Common myeloid progenitor, CD34-positive (primary cell): ENCODE measurements at regions of chr1 and their contacts with region 1.

Region 1: DNA sequence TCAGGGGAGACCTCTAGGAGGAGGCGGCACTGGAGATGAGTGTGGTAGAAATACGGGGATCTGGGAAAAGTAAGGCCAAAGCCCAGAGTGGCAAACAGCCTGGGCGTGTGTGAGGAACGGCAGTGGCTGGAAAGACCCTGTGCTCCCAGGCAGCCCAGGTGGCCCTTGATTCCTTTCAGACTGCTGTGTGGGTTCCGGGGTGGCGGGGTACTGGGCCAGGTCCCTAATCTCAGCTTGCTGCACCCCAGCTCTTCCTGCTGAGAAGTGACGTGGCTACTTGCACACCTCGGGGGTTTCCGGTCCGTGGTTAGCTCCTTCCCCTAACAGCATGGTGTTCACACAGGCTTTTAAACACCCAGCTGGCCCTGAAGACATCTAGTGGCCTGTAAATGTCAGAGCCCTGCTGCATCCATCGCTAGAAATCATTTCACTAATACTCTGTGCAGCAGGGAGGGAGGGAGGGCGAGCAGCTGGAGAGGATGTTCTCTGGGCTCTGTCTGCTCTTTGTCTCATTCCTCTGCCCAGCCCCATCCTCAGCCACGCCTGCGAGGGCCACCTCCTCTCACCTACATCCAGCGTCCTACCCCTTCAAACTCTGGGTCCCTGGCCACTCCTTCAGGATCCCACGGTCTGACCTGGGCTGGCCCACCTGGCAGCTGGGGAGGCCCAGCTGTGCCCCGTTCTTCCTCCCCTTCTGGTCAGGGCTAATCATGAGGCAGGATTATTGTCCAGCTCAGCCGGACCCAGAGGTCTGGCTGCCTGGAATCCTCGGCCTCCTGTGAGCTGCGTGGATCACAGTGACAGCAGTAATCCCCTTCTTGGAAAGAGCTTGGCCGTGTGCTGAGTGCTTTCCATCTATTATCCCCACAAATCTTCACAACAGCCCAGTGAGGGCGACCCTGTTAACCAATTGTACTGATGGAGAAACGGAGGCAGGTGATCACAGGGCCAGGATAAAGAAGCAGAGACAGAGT is 7.2 kb downstream of the ZDHHC18 start:
- DNase-seq: peak; percentile 96 to 99 (median 97)
- H3K4me3 ChIP-seq: peak overlapping the region in 4 of 7 experiments; percentile 21 to 53 (median 36)
- H3K27ac ChIP-seq: peak overlapping the region; percentile 70 to 85
- H3K4me1 ChIP-seq: peaks cover 13 to 48% (median 33%) of the 10 kb centered on the region in 4 experiments
- H3K27me3 ChIP-seq: no peaks in the 10 kb centered on the region

Region 2: DNA sequence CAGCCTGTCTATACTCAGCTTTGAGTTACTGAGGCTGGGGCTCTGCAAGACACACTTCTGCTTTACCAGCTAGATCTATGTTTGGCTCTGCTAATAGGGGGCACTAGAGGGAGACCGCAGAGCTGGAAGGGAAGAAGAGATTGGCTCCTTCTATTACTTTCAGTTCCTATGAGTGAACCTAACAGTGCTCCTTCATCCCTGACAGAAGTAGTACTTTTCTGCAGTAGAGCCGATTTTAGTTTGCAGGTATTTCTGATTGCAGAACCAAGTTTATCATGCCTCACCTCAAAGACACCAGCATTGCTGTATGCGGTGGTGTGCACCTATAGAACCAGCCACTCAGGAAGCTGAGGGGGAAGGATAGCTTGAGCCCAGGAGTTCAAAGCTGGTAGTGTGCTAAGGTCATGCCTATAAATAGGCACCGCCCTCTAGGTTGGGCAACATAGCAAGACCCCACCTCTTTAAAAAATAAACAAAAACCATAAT is 12.9 kb before region 1 on chr1:
- CTCF ChIA-PET with region 1: interaction called, 47 read pairs
- POLR2A ChIA-PET with region 1: interaction called, 3 read pairs
- DNase-seq: peak; percentile 61 to 86 (median 86)
- H3K4me3 ChIP-seq: peak overlapping the region in 5 of 7 experiments; percentile 5 to 51 (median 16)
- H3K27ac ChIP-seq: no peak overlapping the region
- H3K4me1 ChIP-seq: peaks cover 0 to 12% (median 8%) of the 10 kb centered on the region in 4 experiments
- H3K27me3 ChIP-seq: no peaks in the 10 kb centered on the region